ENCODE measurements at regions of chr13 and their contacts with region 1.

Region 1: GRCh38 chr13:114032177-114032799 is 58.4 kb upstream of the C13orf46 start:
- DNase-seq: peak in 4 of 5 donors; percentile 55 to 79 (median 63)
- H3K4me3 ChIP-seq: no peak overlapping the region
- H3K27ac ChIP-seq: no peak overlapping the region
- H3K4me1 ChIP-seq: peaks cover 11% of the 10 kb centered on the region
- H3K27me3 ChIP-seq: no peaks in the 10 kb centered on the region
- CTCF ChIP-seq: no peak
- EP300 ChIP-seq: no peak
- POLR2A ChIP-seq: no peak

Region 2: DNA sequence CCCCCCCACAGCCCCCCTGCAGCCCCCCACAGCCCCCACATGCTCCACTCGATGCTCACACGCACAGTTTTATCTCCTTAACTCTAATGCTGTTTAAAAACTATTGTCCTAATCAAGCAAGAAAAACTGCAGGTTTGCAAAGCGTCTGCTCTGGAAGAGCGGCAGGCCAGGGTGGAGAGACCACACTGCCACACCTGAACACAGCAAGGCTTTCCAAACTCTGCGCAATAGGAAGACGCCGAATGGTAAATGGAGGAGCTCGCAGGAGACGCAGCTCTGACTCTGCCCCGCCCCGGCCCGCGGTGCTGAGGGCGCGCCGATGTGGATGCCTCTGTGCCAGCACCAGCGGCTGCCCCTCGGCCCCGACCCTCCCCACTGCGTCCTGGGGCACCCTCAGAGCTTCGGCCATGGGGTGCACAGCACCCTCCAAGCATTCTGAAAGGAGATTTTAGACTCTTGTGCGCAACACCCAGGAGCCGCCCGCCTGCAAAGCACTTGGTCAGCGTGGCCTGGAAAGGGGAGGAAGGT is 67.7 kb after region 1 on chr13:
- intact Hi-C with region 1: loop called in 1 of 4 experiments (anchors 5 kb)
- DNase-seq: peak in 2 of 5 donors; percentile 19 to 22
- H3K4me3 ChIP-seq: no peak overlapping the region
- H3K27ac ChIP-seq: no peak overlapping the region
- H3K4me1 ChIP-seq: no peaks in the 10 kb centered on the region
- H3K27me3 ChIP-seq: no peaks in the 10 kb centered on the region
- CTCF ChIP-seq: no peak
- EP300 ChIP-seq: no peak
- POLR2A ChIP-seq: no peak